ENCODE measurements at regions of chr4 and their contacts with region 1.

Region 1: GRCh38 chr4:40193016-40193571 is 3.7 kb upstream of the RHOH start:
- DNase-seq: peak; percentile 65
- ATAC-seq: peak; percentile 28
- H3K4me3 Mint-ChIP-seq: peak overlapping the region; percentile 93
- H3K27ac Mint-ChIP-seq: peak overlapping the region; percentile 97
- H3K4me1 Mint-ChIP-seq: peaks cover 61% of the 10 kb centered on the region
- H3K27me3 Mint-ChIP-seq: no peaks in the 10 kb centered on the region

Region 2: GRCh38 chr4:40149960-40150385 is 43.1 kb before region 1 on chr4:
- POLR2A ChIA-PET with region 1: interaction called, 10 read pairs
- DNase-seq: peak; percentile 50
- ATAC-seq: peak; percentile 95
- H3K4me3 Mint-ChIP-seq: no peak overlapping the region
- H3K27ac Mint-ChIP-seq: no peak overlapping the region
- H3K4me1 Mint-ChIP-seq: peaks cover 27% of the 10 kb centered on the region
- H3K27me3 Mint-ChIP-seq: no peaks in the 10 kb centered on the region

Region 3: GRCh38 chr4:40205259-40206198 is 12.4 kb after region 1 on chr4:
- POLR2A ChIA-PET with region 1: interaction called, 360 read pairs
- DNase-seq: no peak
- ATAC-seq: peak; percentile 42
- H3K4me3 Mint-ChIP-seq: peak overlapping the region; percentile 93
- H3K27ac Mint-ChIP-seq: peak overlapping the region; percentile 97
- H3K4me1 Mint-ChIP-seq: peaks cover 52% of the 10 kb centered on the region
- H3K27me3 Mint-ChIP-seq: no peaks in the 10 kb centered on the region

Region 4: DNA sequence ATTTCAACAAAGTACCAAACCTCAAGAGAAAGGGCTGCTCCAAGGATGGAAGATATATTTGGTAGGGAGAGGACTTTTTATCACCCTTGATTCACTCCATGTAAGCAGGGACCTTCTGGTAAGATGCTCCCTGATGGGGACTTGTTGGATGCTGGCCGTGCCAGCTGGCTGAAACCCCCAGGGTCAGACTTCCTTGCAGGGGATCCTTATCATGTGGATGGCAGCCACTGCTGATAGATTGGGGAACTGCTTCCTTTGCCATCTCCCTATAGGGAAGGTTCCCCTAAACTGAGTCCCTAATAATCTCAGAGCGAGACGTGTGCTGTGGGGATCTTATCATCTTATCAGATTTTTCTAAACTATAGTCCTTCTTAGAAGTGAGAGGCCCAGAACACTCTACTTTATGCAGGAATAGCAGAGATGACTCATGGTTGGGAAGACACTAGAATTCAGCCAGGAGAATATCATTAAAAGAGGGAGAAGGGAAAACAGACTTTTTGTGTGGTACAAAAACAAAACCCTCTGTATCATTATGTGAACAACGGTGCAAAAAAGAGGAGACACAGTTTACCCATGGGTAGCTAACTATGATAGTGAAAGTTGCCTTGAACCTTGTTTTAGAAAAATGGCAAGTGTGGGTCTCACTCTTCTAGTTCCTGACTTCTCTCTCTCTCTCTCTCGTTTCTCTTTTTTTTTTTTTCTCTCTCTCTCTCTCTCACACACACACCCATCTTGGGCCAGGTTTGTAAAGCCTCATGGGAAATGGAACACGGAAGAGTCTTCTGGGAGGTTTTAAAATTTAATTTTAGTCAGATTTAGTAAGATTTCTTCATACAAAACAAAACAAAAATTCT is 19.8 kb after region 1 on chr4:
- POLR2A ChIA-PET with region 1: interaction called, 360 read pairs
- DNase-seq: no peak
- ATAC-seq: peak; percentile 35
- H3K4me3 Mint-ChIP-seq: peak overlapping the region; percentile 82
- H3K27ac Mint-ChIP-seq: peak overlapping the region; percentile 92
- H3K4me1 Mint-ChIP-seq: peaks cover 74% of the 10 kb centered on the region
- H3K27me3 Mint-ChIP-seq: no peaks in the 10 kb centered on the region

Region 5: GRCh38 chr4:40228497-40229365 is 35.6 kb after region 1 on chr4:
- POLR2A ChIA-PET with region 1: interaction called, 65 read pairs
- DNase-seq: peak; percentile 21
- ATAC-seq: no peak
- H3K4me3 Mint-ChIP-seq: peak overlapping the region; percentile 82
- H3K27ac Mint-ChIP-seq: peak overlapping the region; percentile 94
- H3K4me1 Mint-ChIP-seq: peaks cover 86% of the 10 kb centered on the region
- H3K27me3 Mint-ChIP-seq: no peaks in the 10 kb centered on the region

Region 6: GRCh38 chr4:40238700-40239548 is 45.8 kb after region 1 on chr4:
- POLR2A ChIA-PET with region 1: interaction called, 64 read pairs
- DNase-seq: peak; percentile 60
- ATAC-seq: peak; percentile 90
- H3K4me3 Mint-ChIP-seq: peak overlapping the region; percentile 81
- H3K27ac Mint-ChIP-seq: peak overlapping the region; percentile 92
- H3K4me1 Mint-ChIP-seq: peaks cover 79% of the 10 kb centered on the region
- H3K27me3 Mint-ChIP-seq: no peaks in the 10 kb centered on the region

Region 7: GRCh38 chr4:40262077-40262528 is 69.0 kb after region 1 on chr4:
- POLR2A ChIA-PET with region 1: no interaction called
- DNase-seq: no peak
- ATAC-seq: no peak
- H3K4me3 Mint-ChIP-seq: no peak overlapping the region
- H3K27ac Mint-ChIP-seq: no peak overlapping the region
- H3K4me1 Mint-ChIP-seq: peaks cover 51% of the 10 kb centered on the region
- H3K27me3 Mint-ChIP-seq: no peaks in the 10 kb centered on the region

Region 8: GRCh38 chr4:40309250-40309774 is 116.2 kb after region 1 on chr4:
- POLR2A ChIA-PET with region 1: interaction called, 132 read pairs
- DNase-seq: peak; percentile 92
- ATAC-seq: peak; percentile 61
- H3K4me3 Mint-ChIP-seq: peak overlapping the region; percentile 83
- H3K27ac Mint-ChIP-seq: peak overlapping the region; percentile 94
- H3K4me1 Mint-ChIP-seq: peaks cover 74% of the 10 kb centered on the region
- H3K27me3 Mint-ChIP-seq: no peaks in the 10 kb centered on the region

Region 9: GRCh38 chr4:40576631-40577480 is 383.8 kb after region 1 on chr4:
- POLR2A ChIA-PET with region 1: no interaction called
- DNase-seq: no peak
- ATAC-seq: no peak
- H3K4me3 Mint-ChIP-seq: peak overlapping the region; percentile 14
- H3K27ac Mint-ChIP-seq: peak overlapping the region; percentile 28
- H3K4me1 Mint-ChIP-seq: peaks cover 26% of the 10 kb centered on the region
- H3K27me3 Mint-ChIP-seq: peaks cover 7% of the 10 kb centered on the region

Measured in activated naive CD8-positive, alpha-beta T cell treated with anti-CD3 and anti-CD28 coated beads, Interleukin-2, amount 10 ng/mL, durations not matched to agents 7 days and 5 days (primary cell).